ENCODE measurements at regions of chr4 and their contacts with region 1.

Region 1: GRCh38 chr4:82900331-82901128 is at the start of gene THAP9:
- DNase-seq: peak; percentile 93 to 95
- H3K4me3 ChIP-seq: peak within 1 kb of the TSS; percentile 86
- H3K27ac ChIP-seq: peak within 1 kb of the TSS; percentile 95
- H3K4me1 ChIP-seq: peaks cover 18% of the 10 kb centered on the region
- H3K27me3 ChIP-seq: no peaks in the 10 kb centered on the region
- CTCF ChIP-seq: no peak
- total RNA-seq, gene THAP9: 3.4 and 3.5 TPM in 2 replicates

Region 2: GRCh38 chr4:81881855-81882621 is 1018.5 kb before region 1 on chr4:
- CTCF ChIA-PET with region 1: no interaction called
- POLR2A ChIA-PET with region 1: no interaction called
- intact Hi-C with region 1: no loop called
- DNase-seq: no peak
- H3K4me3 ChIP-seq: no peak overlapping the region
- H3K27ac ChIP-seq: no peak overlapping the region
- H3K4me1 ChIP-seq: no peaks in the 10 kb centered on the region
- H3K27me3 ChIP-seq: no peaks in the 10 kb centered on the region
- CTCF ChIP-seq: no peak

Region 3: DNA sequence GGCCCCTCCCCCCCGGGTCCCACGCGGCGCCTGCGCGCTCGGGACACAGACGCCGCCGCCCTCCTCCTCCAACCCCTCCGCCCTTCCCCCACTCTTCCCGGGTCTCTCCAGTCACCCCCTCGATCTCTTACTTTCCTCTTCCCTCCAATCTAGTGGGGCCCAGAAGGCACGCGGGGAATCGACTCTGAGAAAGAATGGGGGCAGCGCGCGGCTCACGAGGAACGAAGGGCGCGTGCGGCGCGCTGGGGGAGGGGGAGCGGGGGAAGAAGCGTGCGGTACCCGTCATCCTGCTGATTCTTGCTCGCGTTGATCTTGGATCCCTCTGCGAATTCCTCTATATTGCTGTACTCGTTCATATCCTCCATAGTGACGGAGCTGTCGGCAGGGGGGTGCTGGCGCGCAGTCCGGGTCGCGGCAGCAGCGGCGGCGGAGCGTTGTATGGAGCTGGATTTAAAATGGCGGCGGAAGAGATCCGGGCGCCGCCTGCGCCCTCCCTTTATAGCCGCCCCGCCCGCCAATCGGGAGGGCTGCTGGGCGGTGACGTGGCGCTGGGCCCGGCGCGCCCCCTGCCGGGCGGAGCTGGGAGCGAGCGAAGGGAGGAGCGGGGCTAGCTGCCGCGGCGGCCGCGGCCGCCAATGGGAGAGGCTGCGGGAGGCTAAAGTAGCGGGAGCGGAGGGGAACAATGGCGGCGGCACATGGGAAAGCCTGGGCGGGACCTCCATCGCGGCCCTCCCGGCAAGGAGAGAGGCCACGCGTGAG is 471.4 kb before region 1 on chr4:
- CTCF ChIA-PET with region 1: no interaction called
- POLR2A ChIA-PET with region 1: no interaction called
- intact Hi-C with region 1: loop called (anchors 1 kb)
- DNase-seq: peak; percentile 68 to 87
- H3K4me3 ChIP-seq: peak overlapping the region; percentile 97
- H3K27ac ChIP-seq: peak overlapping the region; percentile 87
- H3K4me1 ChIP-seq: peaks cover 47% of the 10 kb centered on the region
- H3K27me3 ChIP-seq: no peaks in the 10 kb centered on the region
- CTCF ChIP-seq: peak; percentile 77

Region 4: GRCh38 chr4:82865592-82865991 is 34.9 kb before region 1 on chr4:
- CTCF ChIA-PET with region 1: no interaction called
- POLR2A ChIA-PET with region 1: interaction called, 3 read pairs
- intact Hi-C with region 1: loop called (anchors 2 kb)
- DNase-seq: peak; percentile 16 to 86
- H3K4me3 ChIP-seq: no peak overlapping the region
- H3K27ac ChIP-seq: peak overlapping the region; percentile 81
- H3K4me1 ChIP-seq: peaks cover 5% of the 10 kb centered on the region; the same call in 1 of the 2 replicates
- H3K27me3 ChIP-seq: no peaks in the 10 kb centered on the region
- CTCF ChIP-seq: no peak

Region 5: DNA sequence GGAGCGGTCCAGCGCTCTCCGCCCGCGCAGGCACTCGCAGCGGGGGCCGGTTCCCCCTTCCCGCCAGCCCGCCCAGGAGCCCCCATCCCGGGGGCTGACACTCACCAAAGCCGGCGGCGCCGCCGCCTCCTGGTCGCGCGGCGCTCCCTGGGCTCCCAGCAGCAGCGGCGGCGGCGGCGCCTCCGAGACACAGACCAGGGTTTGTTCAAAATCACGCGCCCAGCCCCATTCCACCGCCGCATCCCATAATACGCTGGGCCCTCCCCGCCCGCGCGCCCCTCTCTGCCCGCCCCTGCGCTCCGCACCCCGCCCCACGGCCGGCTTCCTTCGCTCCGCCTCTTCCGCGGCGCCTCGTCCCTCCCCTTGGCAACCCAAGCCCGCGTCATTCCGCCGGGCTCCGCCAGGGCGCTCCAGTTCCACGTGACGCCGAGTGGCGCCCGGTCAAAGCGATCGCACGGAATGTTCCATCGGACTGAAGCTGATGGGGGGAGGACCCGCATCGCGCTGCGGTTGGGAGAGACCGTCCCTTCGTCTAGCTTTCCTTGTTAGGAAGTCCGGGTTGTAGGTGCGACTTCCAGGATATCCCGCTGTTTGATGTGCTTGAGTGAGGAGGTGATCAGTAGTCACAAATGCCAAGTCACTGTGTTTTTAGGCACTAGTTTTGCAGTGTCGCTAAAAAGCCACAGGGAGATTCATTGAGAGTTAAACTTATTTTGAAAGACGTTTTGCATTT is 112.3 kb after region 1 on chr4:
- CTCF ChIA-PET with region 1: no interaction called
- POLR2A ChIA-PET with region 1: no interaction called
- intact Hi-C with region 1: loop called (anchors 1 kb)
- DNase-seq: peak; percentile 90 to 94
- H3K4me3 ChIP-seq: peak overlapping the region; percentile 83
- H3K27ac ChIP-seq: peak overlapping the region; percentile 81
- H3K4me1 ChIP-seq: peaks cover 32% of the 10 kb centered on the region
- H3K27me3 ChIP-seq: no peaks in the 10 kb centered on the region
- CTCF ChIP-seq: no peak

Measured in PC-9 (cell line).